MCF 10A (cell line): ENCODE measurements at regions of chr18 and their contacts with region 1.

Region 1: GRCh38 chr18:3585656-3586509 is 135.9 kb downstream of the TGIF1 start:
- DNase-seq: peak; percentile 90
- H3K4me3 Mint-ChIP-seq: no peak overlapping the region
- H3K27ac Mint-ChIP-seq: no peak overlapping the region
- H3K4me1 Mint-ChIP-seq: peaks cover 14% of the 10 kb centered on the region
- H3K27me3 Mint-ChIP-seq: no peaks in the 10 kb centered on the region
- CTCF ChIP-seq: peak; percentile 64

Region 2: DNA sequence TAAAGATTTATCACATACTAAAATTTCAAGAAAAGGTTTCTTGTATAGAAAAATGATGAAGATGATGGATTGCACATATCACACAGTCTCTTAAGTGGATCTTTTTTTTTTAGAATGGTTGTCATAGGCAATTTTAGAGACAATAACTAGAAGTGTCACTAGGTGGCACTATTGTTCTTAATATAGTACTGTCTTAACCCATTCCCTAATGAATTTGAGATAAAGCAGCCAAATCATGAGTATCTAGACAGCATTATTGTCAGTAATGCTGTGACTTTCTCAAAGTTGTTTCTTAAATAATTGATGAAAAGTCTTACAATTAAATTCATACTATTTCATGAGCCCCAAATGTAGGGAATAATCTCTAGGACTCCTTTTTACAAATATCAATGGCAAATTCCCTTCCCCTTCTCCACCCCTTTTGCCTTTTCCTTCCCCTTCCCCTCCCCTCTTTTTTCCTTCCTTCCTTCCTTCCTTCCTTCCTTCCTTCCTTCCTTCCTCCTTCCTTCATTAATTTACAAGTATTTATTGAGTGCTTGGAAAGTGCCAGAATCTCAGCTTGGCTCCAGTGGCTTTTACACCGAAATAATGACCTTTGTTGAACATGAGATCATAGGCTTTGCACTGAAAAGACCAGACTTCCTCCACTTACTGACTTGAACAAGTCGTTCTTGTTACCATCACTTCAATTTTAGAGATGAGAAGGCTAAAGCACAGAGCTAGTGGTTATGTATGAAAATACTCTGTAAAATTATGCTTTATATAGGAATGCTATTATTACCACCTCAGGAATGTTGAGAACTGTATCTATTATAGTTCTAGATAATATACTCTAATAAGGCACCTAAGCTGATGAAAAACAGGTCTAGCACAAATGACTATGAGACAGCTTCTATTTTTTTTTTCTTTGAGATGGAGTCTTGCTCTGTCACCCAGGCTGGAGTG is 304.2 kb before region 1 on chr18:
- CTCF ChIA-PET with region 1: interaction called, 46 read pairs
- POLR2A ChIA-PET with region 1: interaction called, 5 read pairs
- intact Hi-C with region 1: loop called (anchors 1 kb)
- DNase-seq: peak; percentile 80
- H3K4me3 Mint-ChIP-seq: no peak overlapping the region
- H3K27ac Mint-ChIP-seq: no peak overlapping the region
- H3K4me1 Mint-ChIP-seq: peaks cover 6% of the 10 kb centered on the region
- H3K27me3 Mint-ChIP-seq: no peaks in the 10 kb centered on the region
- CTCF ChIP-seq: peak; percentile 52

Region 3: DNA sequence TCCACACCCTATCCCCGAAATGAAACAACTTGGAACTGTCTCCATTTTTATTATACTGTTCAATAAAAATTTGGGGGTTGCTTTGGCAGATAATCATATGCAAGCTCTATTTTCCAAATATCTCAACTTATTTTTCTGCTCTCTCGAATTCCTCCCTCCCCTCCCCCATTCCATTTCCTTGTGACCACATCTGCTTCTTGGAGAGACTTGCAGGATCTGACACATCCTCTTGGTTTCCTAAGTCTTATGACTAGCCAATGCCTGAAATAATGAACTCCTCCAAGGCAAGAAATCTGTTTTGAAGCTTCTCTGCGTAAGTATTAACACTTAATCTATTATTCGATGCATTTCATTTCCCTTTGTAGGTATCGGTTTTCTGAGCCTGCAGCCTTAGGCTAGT is 119.8 kb before region 1 on chr18:
- CTCF ChIA-PET with region 1: interaction called, 31 read pairs
- POLR2A ChIA-PET with region 1: interaction called, 7 read pairs
- intact Hi-C with region 1: no loop called
- DNase-seq: peak; percentile 77
- H3K4me3 Mint-ChIP-seq: no peak overlapping the region
- H3K27ac Mint-ChIP-seq: no peak overlapping the region
- H3K4me1 Mint-ChIP-seq: peaks cover 13% of the 10 kb centered on the region
- H3K27me3 Mint-ChIP-seq: no peaks in the 10 kb centered on the region
- CTCF ChIP-seq: no peak

Region 4: DNA sequence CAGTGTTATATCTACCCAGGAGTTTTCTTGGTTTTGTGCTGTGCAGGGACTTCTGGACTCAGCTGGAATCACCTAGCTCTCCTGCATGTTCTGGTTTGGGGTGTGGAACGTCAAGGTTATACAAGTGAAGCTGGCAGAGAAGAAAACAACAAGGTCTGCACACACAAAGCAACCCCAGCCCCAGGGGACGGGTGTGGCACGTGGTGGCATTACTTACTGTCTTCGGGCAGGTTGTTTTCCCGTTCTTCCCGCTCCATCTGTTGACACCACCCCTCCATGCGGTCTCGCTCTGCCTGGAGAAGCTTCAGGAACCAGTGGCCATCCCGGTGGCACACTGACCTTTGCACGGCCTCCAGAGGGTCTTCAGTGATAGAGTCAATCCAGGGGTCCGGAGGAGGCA is 51.9 kb before region 1 on chr18:
- CTCF ChIA-PET with region 1: interaction called, 10 read pairs
- POLR2A ChIA-PET with region 1: no interaction called
- intact Hi-C with region 1: no loop called
- DNase-seq: no peak
- H3K4me3 Mint-ChIP-seq: no peak overlapping the region
- H3K27ac Mint-ChIP-seq: no peak overlapping the region
- H3K4me1 Mint-ChIP-seq: peaks cover 10% of the 10 kb centered on the region
- H3K27me3 Mint-ChIP-seq: no peaks in the 10 kb centered on the region
- CTCF ChIP-seq: no peak

Region 5: GRCh38 chr18:3612315-3612714 is 26.4 kb after region 1 on chr18:
- CTCF ChIA-PET with region 1: no interaction called
- POLR2A ChIA-PET with region 1: no interaction called
- intact Hi-C with region 1: no loop called
- DNase-seq: no peak
- H3K4me3 Mint-ChIP-seq: no peak overlapping the region
- H3K27ac Mint-ChIP-seq: no peak overlapping the region
- H3K4me1 Mint-ChIP-seq: no peaks in the 10 kb centered on the region
- H3K27me3 Mint-ChIP-seq: no peaks in the 10 kb centered on the region
- CTCF ChIP-seq: no peak

Region 6: DNA sequence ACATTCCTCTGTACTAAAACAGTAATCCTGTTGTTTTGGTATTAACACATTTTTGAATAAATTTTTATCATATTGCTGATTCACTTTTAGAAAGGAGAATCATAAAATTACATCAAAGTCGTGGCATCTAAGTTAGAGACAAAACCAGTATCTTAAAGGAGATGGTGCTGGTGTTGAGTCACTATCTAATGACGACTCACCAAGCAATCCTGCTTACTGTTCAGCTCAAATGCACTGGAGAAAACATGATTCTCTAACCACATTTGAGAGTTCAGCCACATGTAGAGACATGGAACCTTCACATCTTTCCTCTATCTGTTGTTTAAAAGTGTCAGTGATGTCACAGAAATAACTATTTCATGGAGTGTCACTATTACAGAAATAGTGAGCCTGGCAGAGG is 337.9 kb after region 1 on chr18:
- CTCF ChIA-PET with region 1: no interaction called
- POLR2A ChIA-PET with region 1: no interaction called
- intact Hi-C with region 1: no loop called
- DNase-seq: no peak
- H3K4me3 Mint-ChIP-seq: no peak overlapping the region
- H3K27ac Mint-ChIP-seq: no peak overlapping the region
- H3K4me1 Mint-ChIP-seq: no peaks in the 10 kb centered on the region
- H3K27me3 Mint-ChIP-seq: no peaks in the 10 kb centered on the region
- CTCF ChIP-seq: no peak

Region 7: DNA sequence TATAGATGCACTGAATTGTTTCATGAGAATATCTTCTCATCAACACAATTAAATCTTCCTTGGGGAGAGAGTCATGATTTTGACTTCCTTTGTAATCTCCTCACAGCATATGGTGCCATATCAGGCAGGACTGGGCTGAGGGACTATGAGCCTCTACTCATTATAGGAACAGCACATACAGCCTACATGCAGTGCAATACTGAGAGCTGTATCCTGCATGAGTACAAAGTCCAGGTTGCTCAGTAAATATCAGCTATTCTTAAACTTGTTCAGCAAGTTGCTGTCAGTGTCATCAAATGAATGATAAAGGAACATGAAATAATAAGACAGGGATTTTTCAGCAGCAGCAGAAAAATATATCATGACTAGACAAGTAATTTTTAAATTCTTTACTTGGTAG is 858.4 kb after region 1 on chr18:
- CTCF ChIA-PET with region 1: no interaction called
- POLR2A ChIA-PET with region 1: no interaction called
- intact Hi-C with region 1: no loop called
- DNase-seq: no peak
- H3K4me3 Mint-ChIP-seq: no peak overlapping the region
- H3K27ac Mint-ChIP-seq: no peak overlapping the region
- H3K4me1 Mint-ChIP-seq: no peaks in the 10 kb centered on the region
- H3K27me3 Mint-ChIP-seq: no peaks in the 10 kb centered on the region
- CTCF ChIP-seq: no peak